Adrenal gland (tissue), 19 donors: ENCODE measurements at regions of chr11 and their contacts with region 1.

Region 1: GRCh38 chr11:102390667-102391465 is 43.9 kb downstream of the BIRC2 start:
- DNase-seq: peak; percentile 58 to 88 (median 75)
- H3K4me3 ChIP-seq: no peak overlapping the region
- H3K27ac ChIP-seq: no peak overlapping the region
- H3K4me1 ChIP-seq: peaks cover 4% of the 10 kb centered on the region in 2 donors
- H3K27me3 ChIP-seq: no peaks in the 10 kb centered on the region
- CTCF ChIP-seq: peak; percentile 79 to 85 (median 83)
- POLR2A ChIP-seq: no peak

Region 2: GRCh38 chr11:102451681-102452460 is 61.0 kb after region 1 on chr11:
- intact Hi-C with region 1: loop called in 1 of 2 experiments (anchors 5 kb)
- DNase-seq: peak; percentile 63 to 76 (median 70)
- H3K4me3 ChIP-seq: peak overlapping the region; percentile 12 to 95 (median 68)
- H3K27ac ChIP-seq: peak overlapping the region; percentile 15 to 89 (median 86)
- H3K4me1 ChIP-seq: peaks cover 33 to 34% of the 10 kb centered on the region in 2 donors
- H3K27me3 ChIP-seq: no peaks in the 10 kb centered on the region
- CTCF ChIP-seq: no peak
- POLR2A ChIP-seq: peak in 1 of 2 donors; percentile 66

Region 3: DNA sequence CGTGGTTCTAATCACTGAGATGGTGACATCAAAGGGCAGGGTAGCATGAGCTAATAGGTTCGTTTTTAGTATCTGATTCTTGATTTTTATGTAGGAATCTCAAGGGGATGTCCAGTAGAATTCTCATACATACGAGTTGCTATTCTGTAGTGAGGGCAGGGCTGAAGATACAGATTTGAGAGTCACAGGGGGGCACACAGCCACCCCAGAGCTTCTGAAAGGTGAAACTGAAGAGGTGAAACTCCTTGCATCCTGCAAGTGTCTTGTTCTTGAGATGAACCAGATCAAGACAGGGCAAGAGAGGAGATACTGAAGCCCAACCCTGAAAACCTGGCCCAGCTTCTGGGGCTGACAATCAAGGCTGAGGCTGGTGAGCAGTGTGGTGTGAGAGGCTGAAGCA is 97.3 kb after region 1 on chr11:
- intact Hi-C with region 1: loop called in 1 of 2 experiments (anchors 10 kb)
- DNase-seq: no peak
- H3K4me3 ChIP-seq: no peak overlapping the region
- H3K27ac ChIP-seq: no peak overlapping the region
- H3K4me1 ChIP-seq: peaks cover 0 to 4% of the 10 kb centered on the region in 2 donors
- H3K27me3 ChIP-seq: no peaks in the 10 kb centered on the region
- CTCF ChIP-seq: no peak
- POLR2A ChIP-seq: no peak